RWPE1 (cell line): ENCODE measurements at regions of chr10 and their contacts with region 1.

Region 1: DNA sequence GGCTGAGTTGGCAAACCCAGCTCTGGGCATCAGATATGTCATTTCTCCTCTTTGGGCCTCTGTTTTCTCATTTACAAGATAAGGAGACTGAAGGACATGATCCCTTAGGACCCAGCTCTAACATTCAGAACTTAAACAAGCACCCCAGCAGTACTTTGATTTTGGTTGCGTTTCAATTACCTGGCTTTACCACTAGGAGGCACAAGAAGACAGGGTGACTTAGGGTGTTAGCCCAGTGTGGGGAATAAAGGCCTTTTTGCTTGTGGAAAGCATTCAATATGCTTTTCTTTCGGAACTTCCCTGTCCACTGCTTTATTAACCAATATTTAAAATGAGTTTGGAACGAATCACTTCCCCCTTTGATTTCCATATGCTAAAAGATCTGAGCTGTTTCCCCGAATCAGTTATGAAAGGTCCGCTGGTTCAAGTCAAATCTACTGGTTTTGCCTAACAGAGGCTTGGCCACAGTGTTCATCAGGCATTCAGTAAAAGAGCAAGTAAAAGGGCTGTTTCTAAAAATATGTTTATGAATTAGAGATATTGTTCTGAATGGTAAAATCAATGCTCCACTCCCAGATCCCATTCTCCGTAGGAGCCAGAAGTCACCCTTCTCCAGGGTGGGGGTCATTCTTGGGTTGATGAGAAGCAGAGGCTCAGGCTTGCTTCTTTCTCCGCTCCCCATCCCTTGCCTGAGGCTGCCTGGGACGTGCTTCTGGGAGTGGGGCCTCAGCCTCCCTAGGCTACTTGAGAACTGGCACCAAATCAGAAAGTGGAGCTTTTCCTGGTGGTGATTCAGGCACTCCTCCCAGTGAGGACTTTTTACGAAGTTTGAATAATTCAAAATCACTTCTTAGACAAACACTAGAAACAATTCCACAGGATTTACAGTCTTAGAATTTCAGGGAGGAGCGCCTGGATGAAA is 105.5 kb downstream of the MYOF start:
- DNase-seq: peak; percentile 82
- H3K27ac ChIP-seq: peak overlapping the region; percentile 93
- CTCF ChIP-seq: peak; percentile 90

Region 2: GRCh38 chr10:93363891-93364648 is 12.6 kb before region 1 on chr10:
- CTCF ChIA-PET with region 1: interaction called, 12 read pairs
- POLR2A ChIA-PET with region 1: no interaction called
- DNase-seq: no peak
- H3K27ac ChIP-seq: no peak overlapping the region
- CTCF ChIP-seq: no peak

Region 3: GRCh38 chr10:93488956-93489528 is 112.4 kb after region 1 on chr10:
- CTCF ChIA-PET with region 1: interaction called, 95 read pairs
- POLR2A ChIA-PET with region 1: no interaction called
- DNase-seq: no peak
- H3K27ac ChIP-seq: no peak overlapping the region
- CTCF ChIP-seq: no peak

Region 4: DNA sequence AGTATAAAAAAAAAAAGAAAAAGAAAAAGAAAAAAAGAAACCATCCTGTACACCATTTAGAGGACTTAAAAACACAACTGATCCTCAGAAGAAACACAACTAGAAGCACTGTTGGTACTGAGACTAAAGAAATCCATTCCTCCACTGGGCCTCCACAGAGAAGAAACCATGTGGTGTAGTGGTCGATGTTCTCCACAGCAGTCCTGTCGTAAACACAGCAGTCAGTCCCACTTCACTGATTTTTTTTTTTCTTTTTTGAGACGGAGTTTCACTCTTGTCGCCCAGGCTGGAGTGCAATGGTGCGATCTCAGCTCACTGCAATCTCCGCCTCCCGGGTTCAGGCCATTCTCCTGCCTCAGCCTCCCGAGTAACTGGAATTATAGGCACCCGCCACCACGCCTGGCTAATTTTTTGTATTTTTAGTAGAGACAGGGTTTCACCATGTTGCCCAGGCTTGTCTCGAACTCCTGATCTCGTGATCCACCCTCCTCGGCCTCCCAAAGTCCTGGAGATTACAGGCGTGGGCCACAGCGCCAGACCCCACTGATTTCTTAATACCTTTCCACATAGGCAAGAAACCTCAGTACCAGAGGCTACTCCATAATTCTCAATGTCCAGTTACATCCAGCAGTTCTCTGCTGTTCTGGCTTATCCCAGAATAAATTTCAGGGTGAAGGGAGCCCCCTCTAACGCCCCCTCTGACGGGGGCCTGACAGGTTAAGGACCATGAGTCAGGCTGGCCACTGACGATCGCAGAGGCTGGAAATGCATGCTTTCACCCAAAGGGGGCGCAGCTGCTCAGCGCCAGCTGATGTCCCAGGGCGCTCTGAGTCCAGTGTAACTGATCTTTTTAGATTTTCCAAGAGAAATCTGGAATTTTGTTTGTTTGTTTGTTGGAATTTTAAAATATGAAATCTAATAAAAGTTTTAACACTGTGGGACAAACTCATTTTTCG is 165.0 kb after region 1 on chr10:
- CTCF ChIA-PET with region 1: no interaction called
- POLR2A ChIA-PET with region 1: no interaction called
- DNase-seq: peak; percentile 36
- H3K27ac ChIP-seq: no peak overlapping the region
- CTCF ChIP-seq: peak; percentile 46